GM13976 (cell line): ENCODE measurements at regions of chr22 and their contacts with region 1.

Region 1: GRCh38 chr22:24325105-24325757 is 54.6 kb downstream of the SPECC1L start:
- DNase-seq: peak; percentile 80
- CTCF ChIP-seq: peak; percentile 59

Region 2: GRCh38 chr22:24521791-24522245 is 196.6 kb after region 1 on chr22:
- in situ Hi-C with region 1: loop called (anchors 5 kb)
- DNase-seq: peak; percentile 68
- CTCF ChIP-seq: peak; percentile 66